ENCODE measurements at regions of chr20 and their contacts with region 1.

Region 1: DNA sequence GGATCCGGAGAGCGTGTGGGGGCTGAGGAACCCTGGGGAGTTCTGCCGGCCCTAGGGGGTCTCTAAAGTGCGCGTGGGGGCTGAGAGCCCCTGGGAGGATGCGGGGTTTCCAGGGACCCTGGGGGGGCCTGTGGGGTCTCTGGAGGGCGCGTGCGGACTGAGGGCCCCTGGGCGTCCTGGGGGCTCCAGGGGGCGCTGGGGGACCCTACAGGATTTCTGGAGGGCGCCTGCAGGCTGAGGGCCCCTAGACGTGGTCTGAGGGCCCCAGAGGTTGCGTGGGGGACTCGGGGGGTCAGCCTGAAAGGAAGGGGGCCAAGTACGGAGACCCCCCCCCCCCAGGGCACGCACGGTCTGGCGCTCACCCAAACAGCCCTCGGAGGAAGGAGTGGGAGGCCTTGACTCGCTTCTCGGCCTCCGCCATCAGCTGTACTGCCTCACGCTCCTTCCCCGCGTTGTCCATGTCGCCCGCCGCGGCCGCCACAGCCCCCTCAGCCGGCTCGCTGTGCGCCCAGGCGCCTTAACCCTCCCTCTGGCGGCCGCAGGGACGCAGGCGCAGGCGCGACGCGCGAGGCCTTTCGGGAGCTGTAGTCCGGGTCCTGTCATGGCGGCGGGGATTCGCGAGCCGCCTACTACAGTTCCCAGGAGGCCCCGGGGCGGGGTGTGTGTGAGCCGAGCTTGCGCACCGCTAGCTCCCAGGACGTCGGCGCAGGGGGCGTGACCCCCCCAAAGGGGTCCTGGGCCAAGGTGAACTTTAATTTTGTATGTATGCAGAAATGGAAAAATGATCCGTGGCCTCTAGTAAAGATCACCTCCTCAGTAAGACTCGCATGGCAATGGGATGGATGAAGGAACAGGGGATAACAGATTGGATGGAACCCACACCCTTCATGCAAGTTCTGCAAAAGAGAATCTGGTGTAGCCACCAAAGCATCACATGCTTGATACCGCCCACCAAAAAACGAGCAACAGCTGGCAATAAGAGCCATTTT is at the start of gene NAPB:
- DNase-seq: peak; percentile 94 to 97
- ATAC-seq: peak; percentile 99
- total RNA-seq, gene NAPB: 7.9 to 8.5 TPM

Region 2: DNA sequence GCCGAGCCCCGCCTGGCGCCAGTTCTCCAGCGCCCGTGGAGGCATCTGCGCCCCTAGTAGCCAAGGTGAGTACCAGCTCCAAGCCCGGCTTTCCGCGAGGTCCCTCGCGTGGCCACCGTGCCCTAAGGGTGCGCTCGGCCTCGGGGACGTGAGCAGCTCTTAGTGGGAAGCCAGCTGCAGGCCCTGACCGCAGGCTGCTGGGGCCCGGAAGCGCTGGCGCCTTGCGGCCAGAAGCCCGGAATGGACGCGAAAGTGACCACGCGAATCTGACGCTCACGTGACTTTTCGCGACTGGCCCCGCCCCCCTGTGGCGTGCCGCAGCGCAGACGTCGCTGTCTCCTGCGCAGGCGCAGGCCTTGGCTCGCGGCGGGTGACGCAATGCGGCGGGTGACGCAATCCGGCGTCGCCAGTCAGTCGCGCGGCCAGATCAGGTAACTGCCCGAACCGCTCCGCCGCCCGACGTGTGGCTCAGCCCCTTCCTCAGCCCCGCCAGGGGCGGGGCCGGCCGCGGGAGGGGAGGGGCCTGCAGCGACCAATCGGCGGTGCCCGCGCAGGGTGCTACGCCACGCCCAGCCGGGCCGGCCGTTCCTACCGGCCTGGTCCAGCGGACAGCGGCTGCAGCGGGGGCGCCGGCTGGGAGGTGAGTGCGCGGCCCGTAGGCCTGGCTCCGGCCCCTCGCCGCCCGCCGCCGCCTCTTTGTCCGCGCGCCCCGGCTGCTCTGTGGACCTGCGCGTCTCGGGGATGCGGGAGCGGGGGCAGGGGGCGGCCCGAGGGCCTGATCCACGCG is 59.4 kb before region 1 on chr20 and contains the start of gene GZF1:
- intact Hi-C with region 1: loop called in 1 of 2 experiments (anchors 5 kb)
- DNase-seq: peak; percentile 97 to 98
- ATAC-seq: peak; percentile 77
- total RNA-seq, gene GZF1: 8.3 to 10.2 TPM

Measured in left colon (tissue), 2 donors.